Activated naive CD4-positive, alpha-beta T cell treated with anti-CD3 and anti-CD28 coated beads, Interleukin-2, amount 10 ng/mL, durations not matched to agents 7 days and 5 days (primary cell): ENCODE measurements at regions of chr17 and their contacts with region 1.

Region 1: GRCh38 chr17:42183741-42184711 is 1.2 kb downstream of the HCRT start:
- DNase-seq: peak; percentile 80
- H3K4me3 Mint-ChIP-seq: peak overlapping the region; percentile 82
- H3K27ac Mint-ChIP-seq: peak overlapping the region; percentile 86
- H3K4me1 Mint-ChIP-seq: peaks cover 60% of the 10 kb centered on the region
- H3K27me3 Mint-ChIP-seq: peaks cover 67% of the 10 kb centered on the region

Region 2: GRCh38 chr17:42193969-42194899 is 10.2 kb after region 1 on chr17 and contains the start of gene GHDC:
- CTCF ChIA-PET with region 1: interaction called, 13 read pairs
- DNase-seq: peak; percentile 90
- H3K4me3 Mint-ChIP-seq: peak within 1 kb of the TSS; percentile 86
- H3K27ac Mint-ChIP-seq: peak within 1 kb of the TSS; percentile 80
- H3K4me1 Mint-ChIP-seq: peaks cover 25% of the 10 kb centered on the region
- H3K27me3 Mint-ChIP-seq: no peaks in the 10 kb centered on the region

Region 3: DNA sequence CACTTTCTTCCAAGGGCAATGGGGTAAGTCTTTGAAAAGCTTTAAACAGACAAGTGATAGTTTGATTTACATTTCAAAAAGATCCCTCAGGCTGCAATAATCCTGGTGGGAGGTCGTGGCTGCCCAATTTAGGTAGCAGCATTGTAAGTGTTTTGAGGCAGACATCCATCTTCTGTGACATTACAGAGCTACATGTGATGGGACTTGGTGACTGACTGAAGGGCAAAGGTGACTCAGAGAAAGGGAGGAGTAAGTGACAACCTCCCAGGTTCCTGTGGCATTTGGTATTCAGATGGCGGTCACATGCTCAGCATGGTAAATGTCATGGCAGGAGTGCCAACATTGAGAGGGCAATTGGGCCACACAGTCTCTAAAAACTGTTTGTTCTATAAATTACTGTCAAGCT is 177.8 kb after region 1 on chr17:
- CTCF ChIA-PET with region 1: no interaction called
- DNase-seq: peak; percentile 36
- H3K4me3 Mint-ChIP-seq: no peak overlapping the region
- H3K27ac Mint-ChIP-seq: peak overlapping the region; percentile 25
- H3K4me1 Mint-ChIP-seq: peaks cover 65% of the 10 kb centered on the region
- H3K27me3 Mint-ChIP-seq: no peaks in the 10 kb centered on the region